CD4-positive, alpha-beta T cell (primary cell): ENCODE measurements at regions of chr13 and their contacts with region 1.

Region 1: GRCh38 chr13:20489185-20489820 is 36.4 kb downstream of the CRYL1 start:
- DNase-seq: peak in 6 of 14 experiments; percentile 41 to 75 (median 60)
- ATAC-seq: peak; percentile 96
- H3K4me3 ChIP-seq: no peak overlapping the region
- H3K4me3 Mint-ChIP-seq: no peak overlapping the region
- H3K27ac ChIP-seq: no peak overlapping the region
- H3K27ac Mint-ChIP-seq: no peak overlapping the region
- H3K4me1 ChIP-seq: no peaks in the 10 kb centered on the region
- H3K4me1 Mint-ChIP-seq: peaks cover 10% of the 10 kb centered on the region
- H3K27me3 ChIP-seq: no peaks in the 10 kb centered on the region
- H3K27me3 Mint-ChIP-seq: no peaks in the 10 kb centered on the region
- CTCF ChIP-seq: peak; percentile 86

Region 2: DNA sequence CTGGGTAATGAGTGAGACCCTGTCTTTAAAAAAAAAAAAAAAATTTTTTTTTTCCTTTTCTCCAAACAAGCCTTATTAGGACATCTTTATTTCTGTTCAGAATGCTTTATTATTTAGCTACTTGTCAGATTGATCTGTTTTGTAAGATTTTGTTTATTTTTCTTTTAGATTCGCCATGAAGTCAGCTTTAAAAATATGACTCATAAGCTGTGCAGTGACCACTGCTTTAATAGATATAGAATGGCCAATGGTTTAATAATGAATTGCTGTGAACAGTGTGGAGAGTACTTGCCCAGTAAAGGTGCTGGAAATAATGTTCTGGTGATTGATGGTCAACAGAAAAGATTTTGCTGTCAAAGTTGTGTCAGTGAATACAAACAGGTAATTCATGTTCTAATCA is 483.1 kb before region 1 on chr13:
- CTCF ChIA-PET with region 1: no interaction called
- POLR2A ChIA-PET with region 1: no interaction called
- intact Hi-C with region 1: no loop called
- DNase-seq: no peak
- ATAC-seq: no peak
- H3K4me3 ChIP-seq: no peak overlapping the region
- H3K4me3 Mint-ChIP-seq: no peak overlapping the region
- H3K27ac ChIP-seq: no peak overlapping the region
- H3K27ac Mint-ChIP-seq: no peak overlapping the region
- H3K4me1 ChIP-seq: no peaks in the 10 kb centered on the region
- H3K4me1 Mint-ChIP-seq: peaks cover 17% of the 10 kb centered on the region
- H3K27me3 ChIP-seq: no peaks in the 10 kb centered on the region
- H3K27me3 Mint-ChIP-seq: no peaks in the 10 kb centered on the region
- CTCF ChIP-seq: no peak

Region 3: DNA sequence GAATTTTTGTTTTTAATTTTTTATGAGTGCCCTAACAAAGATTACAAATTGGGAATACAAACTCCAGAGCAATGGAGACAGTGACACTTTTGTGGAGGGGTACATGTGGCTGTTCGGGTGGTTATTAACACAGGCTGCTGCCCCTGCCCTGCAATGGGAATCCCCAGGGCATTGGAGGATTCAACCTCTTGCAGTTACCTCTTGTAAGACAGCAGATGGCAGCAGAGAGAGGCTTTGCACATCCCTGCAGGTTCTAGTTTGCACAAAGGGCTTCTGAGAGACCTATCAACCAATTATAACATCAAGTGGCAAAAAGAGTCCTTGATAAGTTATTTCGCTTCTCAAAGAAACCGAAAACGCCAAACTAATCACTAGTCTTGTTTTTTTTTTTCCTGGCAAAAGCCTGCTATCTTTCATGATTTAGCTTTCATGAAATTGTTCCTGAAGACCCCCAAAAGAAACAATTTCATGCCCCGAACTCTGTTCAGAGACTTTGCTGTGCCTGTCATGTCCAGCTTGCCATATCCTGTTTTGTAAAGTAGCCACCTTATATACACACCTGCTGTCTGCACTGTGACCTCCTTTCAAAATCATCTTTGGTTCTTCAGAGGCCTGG is 307.0 kb before region 1 on chr13:
- CTCF ChIA-PET with region 1: interaction called, 4 read pairs
- POLR2A ChIA-PET with region 1: no interaction called
- intact Hi-C with region 1: loop called (anchors 1 kb)
- DNase-seq: peak in 11 of 14 experiments; percentile 26 to 87 (median 46)
- ATAC-seq: peak; percentile 100
- H3K4me3 ChIP-seq: no peak overlapping the region
- H3K4me3 Mint-ChIP-seq: no peak overlapping the region
- H3K27ac ChIP-seq: no peak overlapping the region
- H3K27ac Mint-ChIP-seq: no peak overlapping the region
- H3K4me1 ChIP-seq: peaks cover 2% of the 10 kb centered on the region
- H3K4me1 Mint-ChIP-seq: no peaks in the 10 kb centered on the region
- H3K27me3 ChIP-seq: peaks cover 17 to 20% of the 10 kb centered on the region in 2 experiments
- H3K27me3 Mint-ChIP-seq: peaks cover 48% of the 10 kb centered on the region
- CTCF ChIP-seq: peak; percentile 84

Region 4: DNA sequence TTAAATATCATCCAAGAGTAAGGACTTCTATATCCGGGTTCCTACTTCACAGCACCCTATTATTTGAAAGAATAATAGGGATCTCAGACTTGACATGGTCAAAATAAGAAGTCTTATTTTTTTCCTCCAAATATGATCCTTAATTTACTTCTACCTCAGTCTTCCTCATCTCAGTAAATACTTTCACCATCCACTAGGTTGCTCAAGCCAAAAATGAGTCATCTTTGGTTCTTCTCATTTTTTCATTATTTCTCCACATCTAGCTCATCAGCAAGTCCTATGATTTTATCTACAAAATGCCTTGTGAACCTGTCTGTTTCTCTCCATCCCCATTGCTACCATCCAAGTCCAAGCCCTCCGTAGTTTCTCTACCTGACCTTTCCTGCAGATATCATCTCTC is 135.3 kb before region 1 on chr13:
- CTCF ChIA-PET with region 1: no interaction called
- POLR2A ChIA-PET with region 1: no interaction called
- intact Hi-C with region 1: loop called in 1 of 2 experiments (anchors 5 kb)
- DNase-seq: peak in 2 of 14 experiments; percentile 28 to 43
- ATAC-seq: no peak
- H3K4me3 ChIP-seq: no peak overlapping the region
- H3K4me3 Mint-ChIP-seq: no peak overlapping the region
- H3K27ac ChIP-seq: no peak overlapping the region
- H3K27ac Mint-ChIP-seq: no peak overlapping the region
- H3K4me1 ChIP-seq: no peaks in the 10 kb centered on the region
- H3K4me1 Mint-ChIP-seq: peaks cover 5% of the 10 kb centered on the region
- H3K27me3 ChIP-seq: no peaks in the 10 kb centered on the region
- H3K27me3 Mint-ChIP-seq: no peaks in the 10 kb centered on the region
- CTCF ChIP-seq: no peak